ENCODE measurements at regions of chr5 and their contacts with region 1.

Region 1: DNA sequence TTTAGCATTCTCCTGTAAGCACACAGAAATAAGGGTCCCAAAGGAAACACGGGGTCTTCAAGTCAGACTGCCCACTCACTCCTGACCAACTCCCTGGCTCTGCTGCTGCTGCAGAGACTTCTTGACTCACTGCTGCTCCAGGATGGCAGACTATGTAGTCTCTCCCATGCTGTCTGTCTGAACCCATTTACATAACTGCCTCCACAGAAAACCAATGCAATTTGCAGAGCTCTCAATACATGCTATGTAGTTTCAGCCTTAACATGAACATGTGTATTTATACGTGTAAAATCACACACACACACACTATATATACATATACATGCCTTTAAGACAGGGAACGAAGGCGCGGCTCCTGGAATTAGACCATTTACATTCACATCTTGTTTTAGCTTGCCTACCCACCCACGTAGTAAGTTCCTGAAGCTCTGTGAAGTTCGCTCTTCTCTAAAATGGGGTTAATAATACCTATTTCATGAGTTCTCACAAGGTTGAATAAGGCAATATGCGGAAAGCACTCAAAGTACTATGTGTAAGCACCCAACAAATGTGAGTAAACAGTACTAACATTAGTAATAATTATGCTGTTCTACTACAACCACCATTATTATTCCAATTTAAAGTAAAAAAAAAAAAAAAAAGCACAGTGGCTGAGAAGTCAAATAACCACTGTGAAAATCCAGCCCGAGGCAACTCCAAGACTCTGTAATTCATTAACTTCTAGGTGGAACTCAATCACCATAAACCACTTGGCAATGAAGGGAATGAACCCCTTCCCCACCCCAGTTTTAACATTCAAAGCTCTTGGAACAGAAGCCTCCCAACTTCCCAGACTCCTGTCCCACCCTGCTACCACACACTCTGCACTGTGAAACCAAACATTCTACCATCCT is 31.8 kb downstream of the PRELID2 start:
- DNase-seq: no peak
- ATAC-seq: no peak

Region 2: GRCh38 chr5:145701387-145701786 is 102.0 kb before region 1 on chr5:
- intact Hi-C with region 1: loop called in 1 of 2 experiments (anchors 10 kb)
- DNase-seq: no peak
- ATAC-seq: no peak

Region 3: DNA sequence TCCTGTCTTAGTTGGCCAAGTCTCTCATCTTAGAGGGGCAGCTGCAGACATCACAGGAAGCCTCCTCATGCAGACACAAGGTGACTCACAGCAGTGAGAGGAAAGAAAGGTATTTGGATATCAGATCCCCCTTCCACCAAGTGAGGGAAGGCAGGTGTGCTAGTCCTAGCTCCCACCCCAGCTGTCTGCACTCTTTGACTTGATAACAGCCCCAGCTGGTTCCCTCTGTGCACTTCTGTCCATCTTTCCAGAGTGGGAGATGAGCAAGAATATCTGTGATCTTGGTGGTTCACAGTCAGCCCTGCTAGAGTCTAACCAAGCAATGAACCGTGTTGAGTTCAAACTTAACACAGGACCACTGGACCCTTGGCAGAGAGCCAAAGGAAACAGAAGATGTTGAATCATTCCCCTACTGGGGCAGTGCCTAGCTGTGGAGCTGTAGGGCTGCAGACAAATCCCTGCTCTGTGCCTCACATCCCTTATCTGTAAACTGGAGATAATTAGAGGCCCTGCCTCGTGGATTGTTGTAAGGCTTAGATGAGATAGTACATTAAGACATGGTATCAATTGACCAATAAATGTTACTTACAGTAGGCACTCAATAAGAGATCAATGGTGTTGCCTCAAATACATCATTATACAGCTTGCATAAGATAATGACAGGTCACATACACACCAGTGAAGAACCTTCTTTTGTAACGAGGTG is 172.2 kb after region 1 on chr5:
- intact Hi-C with region 1: no loop called
- DNase-seq: peak; percentile 28
- ATAC-seq: peak; percentile 8 to 66